ENCODE measurements at regions of chr1 and their contacts with region 1.

Region 1: GRCh38 chr1:218917656-218918055 is 256.0 kb upstream of the LYPLAL1 start:
- DNase-seq: no peak
- ATAC-seq: no peak
- H3K4me3 ChIP-seq: no peak overlapping the region
- H3K27ac ChIP-seq: no peak overlapping the region
- H3K4me1 ChIP-seq: no peaks in the 10 kb centered on the region
- H3K27me3 ChIP-seq: no peaks in the 10 kb centered on the region
- CTCF ChIP-seq: no peak
- POLR2A ChIP-seq: no peak
- RAD21 ChIP-seq: no peak

Region 2: DNA sequence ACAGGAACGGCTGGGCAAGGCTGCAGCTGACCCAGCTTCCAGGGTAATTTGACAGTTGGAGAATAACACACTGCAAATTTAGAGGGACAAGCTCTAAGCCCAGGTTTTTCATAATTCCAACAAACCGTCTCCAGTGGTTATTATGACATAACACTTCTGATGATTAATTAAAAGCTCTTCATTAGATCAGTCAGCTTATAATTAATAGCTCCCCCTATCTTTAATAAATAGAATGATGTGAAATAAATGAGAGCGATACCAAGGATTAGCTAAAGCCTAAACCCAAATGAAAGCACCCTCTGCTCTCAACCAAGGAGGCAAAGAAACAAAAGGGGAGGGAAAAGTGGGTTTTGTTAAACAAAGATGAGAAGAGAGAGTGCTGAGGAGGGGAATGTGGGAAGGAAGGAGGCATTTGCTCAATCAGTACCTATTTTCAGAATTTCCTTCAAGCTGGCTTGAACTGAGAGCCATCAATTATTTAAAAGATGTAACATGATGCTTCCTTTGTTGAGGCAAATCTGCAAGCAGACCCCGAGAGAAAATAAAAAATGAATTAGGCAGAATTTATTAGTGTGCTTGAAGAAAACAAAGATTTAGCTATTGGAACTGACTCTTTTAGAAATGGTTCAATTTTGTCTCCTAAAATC is 1972.7 kb before region 1 on chr1:
- CTCF ChIA-PET with region 1: no interaction called
- POLR2A ChIA-PET with region 1: no interaction called
- RAD21 ChIA-PET with region 1: no interaction called
- intact Hi-C with region 1: loop called (anchors 10 kb)
- DNase-seq: no peak
- ATAC-seq: no peak
- H3K4me3 ChIP-seq: no peak overlapping the region
- H3K27ac ChIP-seq: no peak overlapping the region
- H3K4me1 ChIP-seq: no peaks in the 10 kb centered on the region
- H3K27me3 ChIP-seq: no peaks in the 10 kb centered on the region; the same call in 1 of the 2 replicates
- CTCF ChIP-seq: no peak
- POLR2A ChIP-seq: no peak
- RAD21 ChIP-seq: no peak